ENCODE measurements at regions of chr1 and their contacts with region 1.

Region 1: DNA sequence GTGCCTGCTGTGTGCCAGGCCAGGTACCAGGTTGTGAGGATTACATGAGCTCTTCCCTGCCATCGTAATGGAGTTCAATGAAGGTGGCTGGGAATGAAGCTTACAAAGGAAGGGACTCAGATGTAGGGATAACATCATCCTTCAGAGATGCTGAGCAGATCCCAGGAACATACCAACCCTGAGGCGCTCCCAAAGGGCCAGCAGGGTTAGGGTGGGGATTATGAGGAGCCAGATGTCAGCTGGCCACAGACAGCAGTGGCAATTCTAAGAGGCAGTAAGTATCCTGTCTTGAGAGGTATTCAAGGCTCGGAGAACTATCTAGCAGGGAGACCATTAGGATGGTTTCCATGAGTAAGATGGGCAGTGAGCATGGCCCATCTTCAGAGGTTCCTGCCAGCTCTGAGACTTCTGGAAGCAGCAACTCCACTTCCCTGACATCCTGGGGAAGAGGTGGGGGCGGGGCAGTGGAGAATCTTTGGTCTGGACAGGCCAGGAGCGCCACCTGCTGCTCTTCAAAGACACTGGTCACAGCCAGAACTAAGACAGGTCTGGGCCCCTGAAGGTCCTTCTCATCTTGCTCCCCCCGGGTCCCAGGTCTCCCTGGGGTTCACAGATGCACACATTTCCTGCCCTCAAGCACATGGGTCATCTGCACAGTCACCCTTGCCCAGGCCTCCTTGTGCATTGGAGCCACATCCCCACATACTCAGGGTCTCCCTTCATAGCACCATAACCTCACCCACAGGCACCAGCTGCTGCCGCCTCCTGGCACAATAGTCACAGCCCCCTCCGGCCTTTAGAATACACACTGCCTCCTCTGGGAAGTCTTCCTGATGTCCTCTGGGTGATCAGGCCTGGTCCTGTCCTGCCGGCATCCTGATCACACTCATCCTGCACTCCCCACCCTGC is 2.7 kb upstream of the SDC3 start:
- DNase-seq: peak; percentile 90 to 91
- H3K4me3 ChIP-seq: no peak overlapping the region
- H3K27ac ChIP-seq: peak overlapping the region in 1 of 2 donors; percentile 45
- H3K4me1 ChIP-seq: no peaks in the 10 kb centered on the region
- H3K27me3 ChIP-seq: no peaks in the 10 kb centered on the region
- CTCF ChIP-seq: peak; percentile 27 to 94 (median 92)
- POLR2A ChIP-seq: no peak

Region 2: GRCh38 chr1:30801771-30802198 is 109.5 kb before region 1 on chr1:
- intact Hi-C with region 1: loop called (anchors 2 kb)
- DNase-seq: peak; percentile 67 to 85
- H3K4me3 ChIP-seq: peak overlapping the region in 2 of 3 donors; percentile 3 to 13
- H3K27ac ChIP-seq: no peak overlapping the region
- H3K4me1 ChIP-seq: peaks cover 8% of the 10 kb centered on the region in 2 donors
- H3K27me3 ChIP-seq: no peaks in the 10 kb centered on the region
- CTCF ChIP-seq: peak; percentile 71 to 96 (median 95)
- POLR2A ChIP-seq: no peak

Region 3: GRCh38 chr1:31216016-31216415 is 304.7 kb after region 1 on chr1:
- intact Hi-C with region 1: no loop called
- DNase-seq: peak; percentile 37 to 66
- H3K4me3 ChIP-seq: no peak overlapping the region
- H3K27ac ChIP-seq: peak overlapping the region; percentile 33 to 48
- H3K4me1 ChIP-seq: peaks cover 0 to 8% of the 10 kb centered on the region in 2 donors
- H3K27me3 ChIP-seq: no peaks in the 10 kb centered on the region
- CTCF ChIP-seq: no peak
- POLR2A ChIP-seq: no peak

Region 4: DNA sequence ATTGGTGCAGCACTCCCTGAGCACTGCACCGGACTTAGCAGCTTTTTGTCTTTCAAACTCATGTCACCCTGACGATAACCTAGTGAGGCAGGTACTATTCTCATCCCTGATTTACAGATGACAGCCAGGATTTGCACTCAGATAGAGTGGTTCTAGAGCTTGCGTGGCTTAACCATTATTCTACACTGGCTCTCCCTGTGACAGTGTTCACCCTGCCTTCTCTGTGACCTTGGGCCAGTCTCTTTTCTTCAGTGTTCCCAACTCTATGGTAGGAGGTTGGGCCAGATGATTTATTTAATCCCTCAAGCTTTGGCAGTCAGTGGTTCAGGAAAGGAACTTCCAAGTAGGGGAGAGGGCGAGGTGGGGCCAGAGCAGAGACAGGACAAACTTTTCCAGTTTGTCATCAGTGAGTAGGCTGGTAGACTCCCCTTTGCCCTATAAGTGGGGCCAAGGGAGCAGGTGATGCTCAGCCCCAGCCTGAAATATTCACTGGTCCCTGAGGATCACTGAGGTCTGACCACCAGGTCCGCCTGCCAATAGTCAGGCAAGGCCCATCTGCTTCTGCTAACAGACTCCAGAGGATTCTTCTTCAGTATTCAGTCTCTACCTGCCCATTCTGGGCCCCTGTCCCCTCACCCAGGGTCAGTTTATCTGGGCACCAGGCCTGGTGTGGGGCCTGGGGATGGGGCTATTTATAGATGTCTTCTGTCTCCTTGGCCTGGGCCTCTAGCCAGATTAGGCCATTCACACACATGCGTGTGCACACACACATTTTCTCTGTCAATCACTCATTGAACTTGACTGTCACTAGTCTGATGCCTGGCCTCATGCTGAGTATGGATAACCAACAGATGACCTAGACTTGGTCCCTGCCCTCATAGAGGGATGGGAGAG is 470.3 kb after region 1 on chr1:
- intact Hi-C with region 1: no loop called
- DNase-seq: no peak
- H3K4me3 ChIP-seq: no peak overlapping the region
- H3K27ac ChIP-seq: peak overlapping the region; percentile 79 to 80
- H3K4me1 ChIP-seq: peaks cover 0 to 4% of the 10 kb centered on the region in 2 donors
- H3K27me3 ChIP-seq: no peaks in the 10 kb centered on the region
- CTCF ChIP-seq: no peak
- POLR2A ChIP-seq: no peak

Region 5: DNA sequence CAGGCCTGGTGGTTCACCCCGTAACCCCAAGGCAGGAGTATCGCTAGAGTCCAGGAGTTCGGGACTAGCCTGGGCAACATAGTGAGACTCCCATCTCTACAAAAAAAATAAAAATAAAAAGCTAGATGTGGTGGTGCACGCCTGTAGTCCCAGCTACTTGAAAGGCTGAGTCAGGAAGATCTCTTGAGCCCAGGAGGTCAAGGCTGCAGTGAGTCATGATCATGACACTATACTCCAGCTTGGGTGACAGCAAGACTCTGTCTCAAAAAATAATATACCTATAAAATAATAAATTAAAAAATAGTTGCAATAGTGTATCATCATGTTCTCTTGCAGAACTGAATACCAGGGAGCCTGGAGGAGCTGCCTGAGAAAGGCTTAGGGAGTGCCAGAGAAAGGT is 1141.6 kb after region 1 on chr1:
- intact Hi-C with region 1: no loop called
- DNase-seq: no peak
- H3K4me3 ChIP-seq: no peak overlapping the region
- H3K27ac ChIP-seq: no peak overlapping the region
- H3K4me1 ChIP-seq: no peaks in the 10 kb centered on the region
- H3K27me3 ChIP-seq: no peaks in the 10 kb centered on the region
- CTCF ChIP-seq: no peak
- POLR2A ChIP-seq: no peak